PC-3 (cell line): ENCODE measurements at regions of chr2 and their contacts with region 1.

Region 1: DNA sequence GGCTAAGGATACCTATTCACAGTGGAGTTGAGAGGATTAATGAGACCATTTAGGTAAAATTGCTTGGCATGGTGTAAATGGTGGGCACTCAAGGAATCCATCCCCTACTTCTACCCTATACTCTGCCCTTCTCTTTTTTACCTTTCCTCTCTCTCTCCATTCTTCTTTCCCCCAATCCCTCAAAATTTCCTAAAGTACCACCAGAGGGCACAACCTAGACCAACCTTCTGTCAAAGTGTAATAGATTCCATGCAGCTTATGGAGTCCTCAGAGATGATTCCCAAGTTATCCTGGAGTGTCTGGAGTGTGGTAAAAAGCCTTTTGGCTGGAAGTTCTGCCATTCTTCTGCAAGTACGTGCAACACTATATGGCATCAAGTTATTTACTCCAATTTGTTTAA is 33.0 kb upstream of the CCDC195 start:
- DNase-seq: peak; percentile 23
- ATAC-seq: no peak
- H3K4me3 ChIP-seq: no peak overlapping the region
- H3K27ac ChIP-seq: no peak overlapping the region
- H3K4me1 ChIP-seq: no peaks in the 10 kb centered on the region
- H3K27me3 ChIP-seq: no peaks in the 10 kb centered on the region
- CTCF ChIP-seq: peak; percentile 54; the same call in 1 of the 2 replicates

Region 2: GRCh38 chr2:224678634-224679263 is 70.4 kb before region 1 on chr2:
- CTCF ChIA-PET with region 1: no interaction called
- POLR2A ChIA-PET with region 1: no interaction called
- intact Hi-C with region 1: loop called (anchors 10 kb)
- DNase-seq: peak; percentile 71
- ATAC-seq: peak; percentile 76
- H3K4me3 ChIP-seq: peak overlapping the region; percentile 41
- H3K27ac ChIP-seq: peak overlapping the region; percentile 80
- H3K4me1 ChIP-seq: peaks cover 20% of the 10 kb centered on the region
- H3K27me3 ChIP-seq: no peaks in the 10 kb centered on the region
- CTCF ChIP-seq: no peak

Region 3: DNA sequence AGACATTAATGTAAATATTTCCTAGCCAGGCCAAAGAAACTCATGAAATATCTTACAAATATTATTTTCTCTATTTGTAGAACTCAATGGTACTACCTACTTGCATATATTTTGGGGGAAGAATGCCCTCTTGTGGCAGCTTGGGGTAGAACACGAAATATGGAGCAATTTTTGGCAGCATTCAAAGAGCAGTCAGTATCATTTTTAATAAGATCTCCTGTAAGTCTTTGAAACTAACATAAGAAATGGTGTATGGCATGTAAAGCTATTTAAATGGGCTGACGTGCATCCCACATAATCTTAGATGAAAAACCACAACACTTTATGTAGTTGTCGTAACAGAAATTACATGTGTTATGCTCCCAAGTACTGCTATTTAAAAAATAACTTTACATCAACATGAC is 29.3 kb after region 1 on chr2:
- CTCF ChIA-PET with region 1: no interaction called
- POLR2A ChIA-PET with region 1: no interaction called
- intact Hi-C with region 1: loop called (anchors 1 kb)
- DNase-seq: peak; percentile 77
- ATAC-seq: peak; percentile 73
- H3K4me3 ChIP-seq: no peak overlapping the region
- H3K27ac ChIP-seq: no peak overlapping the region
- H3K4me1 ChIP-seq: no peaks in the 10 kb centered on the region
- H3K27me3 ChIP-seq: no peaks in the 10 kb centered on the region
- CTCF ChIP-seq: peak; percentile 89